Endothelial cell of umbilical vein (primary cell): ENCODE measurements at regions of chr18 and their contacts with region 1.

Region 1: GRCh38 chr18:62999392-62999791 is 284.1 kb downstream of the PHLPP1 start:
- DNase-seq: peak; percentile 90
- H3K4me3 ChIP-seq: no peak overlapping the region
- H3K27ac ChIP-seq: no peak overlapping the region
- H3K4me1 ChIP-seq: peaks cover 10% of the 10 kb centered on the region
- H3K27me3 ChIP-seq: peaks cover 0 to 1% of the 10 kb centered on the region in 2 experiments
- CTCF ChIP-seq: no peak
- POLR2A ChIP-seq: no peak

Region 2: GRCh38 chr18:61093965-61094364 is 1905.4 kb before region 1 on chr18:
- CTCF ChIA-PET with region 1: no interaction called
- POLR2A ChIA-PET with region 1: no interaction called
- dilution Hi-C with region 1: no loop called
- intact Hi-C with region 1: loop called (anchors 5 kb)
- DNase-seq: no peak
- H3K4me3 ChIP-seq: no peak overlapping the region
- H3K27ac ChIP-seq: no peak overlapping the region
- H3K4me1 ChIP-seq: no peaks in the 10 kb centered on the region
- H3K27me3 ChIP-seq: peaks cover 0 to 1% of the 10 kb centered on the region in 2 experiments
- CTCF ChIP-seq: no peak
- POLR2A ChIP-seq: no peak